Heart right ventricle (tissue), 16 donors: ENCODE measurements at regions of chr1 and their contacts with region 1.

Region 1: DNA sequence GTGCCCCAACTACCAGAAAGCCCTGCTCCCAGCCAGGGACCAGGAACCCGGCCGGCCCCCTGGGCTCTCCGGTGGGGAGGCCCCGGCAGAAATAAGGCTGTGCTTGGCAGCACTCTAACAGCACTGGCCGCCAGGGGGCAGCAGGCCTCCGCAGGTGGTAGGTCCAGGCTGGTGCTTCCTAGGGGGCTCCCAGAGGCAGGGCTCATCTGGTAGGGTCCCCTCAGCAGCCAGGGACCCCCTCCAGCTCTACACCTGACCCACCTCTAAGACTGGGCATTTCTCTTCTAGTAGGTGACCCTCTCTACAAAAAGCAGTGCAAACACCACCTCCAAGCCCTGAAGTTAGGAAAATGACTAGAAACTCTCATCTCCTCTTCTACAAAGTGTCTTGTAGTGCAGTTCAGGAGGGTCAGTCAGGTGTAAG is 85.6 kb downstream of the STUM start:
- DNase-seq: peak; percentile 80 to 86
- ATAC-seq: peak; percentile 64 to 83 (median 79)
- H3K4me3 ChIP-seq: no peak overlapping the region
- H3K27ac ChIP-seq: peak overlapping the region in 8 of 10 donors; percentile 11 to 71 (median 40)
- H3K4me1 ChIP-seq: peaks cover 7 to 68% (median 40%) of the 10 kb centered on the region in 9 donors
- H3K27me3 ChIP-seq: no peaks in the 10 kb centered on the region
- CTCF ChIP-seq: peak; percentile 93 to 98 (median 95)

Region 2: GRCh38 chr1:226547754-226548191 is 86.4 kb before region 1 on chr1:
- intact Hi-C with region 1: no loop called
- DNase-seq: peak; percentile 75 to 82
- ATAC-seq: peak; percentile 69 to 83 (median 77)
- H3K4me3 ChIP-seq: peak overlapping the region in 9 of 10 donors; percentile 5 to 62 (median 55)
- H3K27ac ChIP-seq: peak overlapping the region in 1 of 10 donors; percentile 5
- H3K4me1 ChIP-seq: peaks cover 12 to 85% (median 40%) of the 10 kb centered on the region in 9 donors
- H3K27me3 ChIP-seq: peaks cover 0 to 45% (median 14%) of the 10 kb centered on the region in 7 donors
- CTCF ChIP-seq: peak; percentile 64 to 95 (median 85)

Region 3: DNA sequence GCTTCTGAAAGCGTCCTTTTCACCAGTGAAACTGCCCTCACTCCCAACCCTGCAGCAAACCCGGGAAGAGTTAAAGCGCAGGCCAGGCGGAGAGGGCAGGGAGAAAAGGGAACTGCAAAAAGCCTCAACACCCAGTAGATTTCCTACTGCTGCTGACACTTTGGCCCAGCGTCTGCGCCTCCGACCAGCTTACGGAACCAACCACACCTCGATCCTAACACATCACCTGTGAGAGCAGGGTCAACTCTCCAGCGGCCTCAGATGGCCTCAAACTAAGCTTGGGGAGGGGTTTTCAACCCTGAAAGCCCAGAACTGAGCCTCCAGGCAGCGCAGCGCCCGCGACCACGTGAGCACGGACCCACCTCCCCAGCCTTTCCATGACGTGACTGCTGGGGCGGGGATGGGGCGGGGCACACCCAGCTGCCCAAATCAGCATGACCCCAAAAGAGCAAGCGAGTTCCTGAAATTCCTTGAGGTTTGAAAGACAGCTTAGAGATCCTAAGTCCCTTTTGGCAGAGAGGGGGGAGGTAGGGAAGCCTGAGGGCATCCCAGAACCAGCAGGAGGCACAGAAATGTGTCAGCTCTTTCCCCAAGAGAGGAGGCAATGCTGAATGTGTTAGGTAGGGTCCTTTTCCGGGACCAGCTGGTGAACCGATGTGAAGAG is 45.8 kb after region 1 on chr1:
- intact Hi-C with region 1: loop called in 2 of 10 experiments (anchors 10 kb)
- DNase-seq: peak; percentile 89 to 91
- ATAC-seq: peak; percentile 84 to 90 (median 88)
- H3K4me3 ChIP-seq: peak overlapping the region in 9 of 10 donors; percentile 0 to 52 (median 48)
- H3K27ac ChIP-seq: peak overlapping the region; percentile 42 to 93 (median 90)
- H3K4me1 ChIP-seq: peaks cover 0 to 100% (median 78%) of the 10 kb centered on the region in 9 donors
- H3K27me3 ChIP-seq: no peaks in the 10 kb centered on the region
- CTCF ChIP-seq: peak in 1 of 9 donors; percentile 7

Region 4: GRCh38 chr1:226687426-226687825 is 53.2 kb after region 1 on chr1:
- intact Hi-C with region 1: loop called in 4 of 10 experiments (anchors 2 to 10 kb)
- DNase-seq: no peak
- ATAC-seq: peak in 5 of 8 donors; percentile 13 to 59 (median 43)
- H3K4me3 ChIP-seq: no peak overlapping the region
- H3K27ac ChIP-seq: peak overlapping the region in 8 of 10 donors; percentile 7 to 78 (median 66)
- H3K4me1 ChIP-seq: peaks cover 0 to 98% (median 76%) of the 10 kb centered on the region in 9 donors
- H3K27me3 ChIP-seq: no peaks in the 10 kb centered on the region
- CTCF ChIP-seq: peak in 6 of 9 donors; percentile 35 to 48 (median 39)

Region 5: DNA sequence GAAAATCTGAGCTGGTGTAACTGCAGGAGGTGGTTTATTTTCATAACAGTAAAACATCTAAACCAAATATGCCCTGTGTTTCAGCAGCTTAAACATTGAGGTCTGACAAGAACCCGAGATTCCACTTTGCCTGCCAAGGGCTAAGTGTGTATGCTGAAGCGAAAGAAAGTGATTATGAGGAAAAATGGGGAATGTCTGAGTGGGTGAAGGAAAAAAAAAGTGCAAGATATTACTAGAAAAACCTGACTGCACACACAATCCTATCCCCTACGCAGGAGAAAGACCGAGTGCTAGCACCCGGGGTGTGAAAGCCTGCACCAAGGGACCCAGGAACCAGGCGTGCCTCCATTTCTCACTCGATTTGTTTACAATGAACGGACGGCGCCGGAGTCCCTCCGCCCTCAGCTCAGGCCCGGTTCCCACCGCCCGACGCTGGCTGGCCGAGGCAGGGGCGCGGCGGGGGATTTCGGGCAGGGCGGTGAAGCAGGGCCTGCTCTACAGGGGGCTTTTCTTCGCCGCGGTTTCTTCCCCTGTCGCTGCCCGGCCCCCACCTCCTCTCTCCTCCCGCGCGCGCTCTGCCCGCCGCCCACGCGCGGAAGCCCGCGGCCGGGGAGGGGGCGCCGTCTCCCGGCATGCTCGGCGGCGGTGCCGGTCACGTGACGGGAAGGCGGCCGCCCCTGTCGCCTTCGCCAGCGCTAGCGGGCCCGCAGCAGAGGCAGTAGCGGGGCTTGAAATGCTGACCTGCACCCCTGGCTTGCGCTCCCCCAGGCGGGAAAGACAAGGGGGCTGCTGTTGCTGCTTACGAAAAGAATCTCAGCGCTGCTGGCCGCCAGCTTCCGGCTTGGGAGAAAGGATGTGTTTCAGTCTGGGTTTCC is 69.0 kb after region 1 on chr1:
- intact Hi-C with region 1: no loop called
- DNase-seq: peak; percentile 78 to 82
- ATAC-seq: peak; percentile 85 to 92 (median 90)
- H3K4me3 ChIP-seq: peak overlapping the region; percentile 33 to 81 (median 70)
- H3K27ac ChIP-seq: peak overlapping the region; percentile 94 to 99 (median 96)
- H3K4me1 ChIP-seq: peaks cover 0 to 88% (median 48%) of the 10 kb centered on the region in 9 donors
- H3K27me3 ChIP-seq: no peaks in the 10 kb centered on the region
- CTCF ChIP-seq: no peak

Region 6: GRCh38 chr1:226870401-226871279 is 236.5 kb after region 1 on chr1 and contains the start of gene PSEN2:
- intact Hi-C with region 1: no loop called
- DNase-seq: peak; percentile 71 to 81
- ATAC-seq: peak; percentile 82 to 92 (median 90)
- H3K4me3 ChIP-seq: peak within 1 kb of the TSS; percentile 63 to 90 (median 80)
- H3K27ac ChIP-seq: peak within 1 kb of the TSS; percentile 11 to 90 (median 79)
- H3K4me1 ChIP-seq: peaks cover 11 to 52% (median 23%) of the 10 kb centered on the region in 9 donors
- H3K27me3 ChIP-seq: no peaks in the 10 kb centered on the region
- CTCF ChIP-seq: peak in 5 of 9 donors; percentile 28 to 58 (median 31)
- total RNA-seq, gene PSEN2: 17.7 to 25.8 (median 20.2) TPM

Region 7: DNA sequence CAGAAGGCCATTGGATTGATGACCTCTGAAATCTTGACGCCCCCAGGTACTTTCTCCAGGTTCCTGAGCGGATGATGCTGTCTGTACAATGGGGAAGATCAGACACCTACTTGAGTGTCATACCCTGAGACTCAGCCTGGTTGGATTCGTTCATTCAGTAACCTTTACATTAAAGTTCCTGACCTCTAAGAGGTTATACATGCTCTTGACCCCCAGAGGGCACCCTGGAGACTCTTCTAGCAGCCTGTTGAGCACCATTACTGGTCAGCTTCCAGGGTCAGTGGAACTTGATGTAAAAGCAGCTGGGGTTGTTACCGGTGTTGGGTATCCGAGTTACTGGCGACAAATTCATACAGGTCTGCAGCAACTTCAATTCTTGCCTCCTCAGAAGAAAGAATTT is 814.9 kb after region 1 on chr1:
- intact Hi-C with region 1: loop called in 2 of 10 experiments (anchors 5 to 10 kb)
- DNase-seq: no peak
- ATAC-seq: peak in 1 of 8 donors; percentile 26
- H3K4me3 ChIP-seq: no peak overlapping the region
- H3K27ac ChIP-seq: no peak overlapping the region
- H3K4me1 ChIP-seq: peaks cover 0 to 16% (median 7%) of the 10 kb centered on the region in 9 donors
- H3K27me3 ChIP-seq: peaks cover 0 to 20% (median 3%) of the 10 kb centered on the region in 7 donors
- CTCF ChIP-seq: peak in 7 of 9 donors; percentile 33 to 56 (median 40)